Vagina (tissue), 2 donors: ENCODE measurements at regions of chr2 and their contacts with region 1.

Region 1: DNA sequence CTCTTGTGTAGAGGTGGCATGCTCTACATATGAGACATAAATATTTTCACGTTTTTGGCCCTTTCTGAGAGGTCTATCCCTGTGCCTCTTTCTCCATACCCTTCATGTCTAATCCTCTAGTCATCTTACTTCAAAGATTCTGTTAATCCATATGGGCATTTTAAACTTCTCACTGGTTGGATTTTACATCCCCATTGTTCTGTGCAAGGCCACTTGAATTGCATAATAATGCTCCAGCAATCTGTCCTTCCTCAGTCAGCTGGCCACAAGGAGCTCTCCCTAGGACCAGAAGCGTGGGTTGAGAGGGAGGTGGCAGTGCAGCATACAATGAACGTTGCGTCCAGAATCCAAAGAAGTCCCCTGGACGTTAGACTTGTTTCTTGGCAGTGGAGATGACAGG is 58.2 kb downstream of the TDRD15 start:
- DNase-seq: no peak
- H3K4me3 ChIP-seq: no peak overlapping the region
- H3K27ac ChIP-seq: no peak overlapping the region
- H3K4me1 ChIP-seq: no peaks in the 10 kb centered on the region
- H3K27me3 ChIP-seq: no peaks in the 10 kb centered on the region
- CTCF ChIP-seq: no peak
- POLR2A ChIP-seq: no peak

Region 2: GRCh38 chr2:22037274-22037673 is 855.3 kb after region 1 on chr2:
- intact Hi-C with region 1: loop called (anchors 10 kb)
- DNase-seq: no peak
- H3K4me3 ChIP-seq: no peak overlapping the region
- H3K27ac ChIP-seq: no peak overlapping the region
- H3K4me1 ChIP-seq: no peaks in the 10 kb centered on the region
- H3K27me3 ChIP-seq: no peaks in the 10 kb centered on the region
- CTCF ChIP-seq: no peak
- POLR2A ChIP-seq: no peak